B cell (primary cell): ENCODE measurements at regions of chr14 and their contacts with region 1.

Region 1: DNA sequence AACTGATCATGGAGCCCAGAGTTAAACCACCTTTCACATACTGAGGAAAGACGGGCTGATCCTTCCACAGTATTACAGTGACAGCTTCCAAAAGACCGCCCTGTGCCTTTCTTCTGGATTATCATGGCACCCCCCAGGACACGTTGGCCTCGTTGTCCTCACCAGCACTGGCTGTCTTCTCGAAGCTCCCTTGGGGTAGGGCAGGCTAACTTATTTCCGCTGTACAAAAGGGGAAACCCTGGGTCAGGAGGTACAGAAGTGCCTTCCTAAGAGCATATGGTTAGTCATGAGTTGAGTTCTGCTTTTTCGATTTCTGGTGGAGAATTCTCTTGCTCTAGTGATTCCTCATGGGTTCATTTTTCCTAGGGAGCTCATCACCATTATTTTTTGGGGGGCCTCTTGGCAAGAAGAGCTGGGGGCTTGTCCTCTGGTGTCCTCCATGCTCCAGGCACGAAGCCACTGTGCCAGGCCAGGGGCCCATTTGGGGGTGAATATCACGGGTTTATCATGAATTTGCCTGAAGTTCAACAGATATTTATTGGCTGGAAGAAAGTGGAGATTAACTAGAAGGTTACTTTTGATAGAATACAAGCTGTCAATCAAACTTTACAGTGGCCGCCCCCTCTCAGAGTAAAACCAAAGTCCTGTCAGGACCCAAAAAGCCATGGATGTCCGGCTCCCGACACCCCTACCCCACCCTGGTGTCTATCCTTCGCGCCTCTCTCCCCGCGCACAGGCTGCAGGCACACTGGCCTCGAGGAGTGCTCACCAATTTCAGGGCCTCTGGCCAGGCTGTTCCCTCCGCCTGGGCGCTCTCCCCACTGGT is 8.8 kb upstream of the TRAF3 start:
- DNase-seq: peak; percentile 94
- ATAC-seq: peak; percentile 95
- H3K4me3 ChIP-seq: peak overlapping the region in 1 of 5 experiments; percentile 10
- H3K4me3 Mint-ChIP-seq: peak overlapping the region; percentile 48
- H3K27ac ChIP-seq: peak overlapping the region; percentile 98
- H3K27ac Mint-ChIP-seq: peak overlapping the region; percentile 97
- H3K4me1 ChIP-seq: peaks cover 47 to 71% of the 10 kb centered on the region in 2 donors
- H3K4me1 Mint-ChIP-seq: peaks cover 68% of the 10 kb centered on the region
- H3K27me3 ChIP-seq: no peaks in the 10 kb centered on the region
- H3K27me3 Mint-ChIP-seq: no peaks in the 10 kb centered on the region
- CTCF ChIP-seq: no peak

Region 2: GRCh38 chr14:102545461-102546265 is 222.8 kb before region 1 on chr14:
- CTCF ChIA-PET with region 1: no interaction called
- POLR2A ChIA-PET with region 1: no interaction called
- intact Hi-C with region 1: no loop called
- DNase-seq: no peak
- ATAC-seq: no peak
- H3K4me3 ChIP-seq: peak overlapping the region in 1 of 5 experiments; percentile 26
- H3K4me3 Mint-ChIP-seq: peak overlapping the region; percentile 68
- H3K27ac ChIP-seq: no peak overlapping the region
- H3K27ac Mint-ChIP-seq: no peak overlapping the region
- H3K4me1 ChIP-seq: peaks cover 20 to 22% of the 10 kb centered on the region in 2 donors
- H3K4me1 Mint-ChIP-seq: peaks cover 10% of the 10 kb centered on the region
- H3K27me3 ChIP-seq: peaks cover 0 to 34% (median 16%) of the 10 kb centered on the region in 4 experiments
- H3K27me3 Mint-ChIP-seq: peaks cover 36% of the 10 kb centered on the region
- CTCF ChIP-seq: no peak

Region 3: GRCh38 chr14:102708494-102708893 is 59.9 kb before region 1 on chr14:
- CTCF ChIA-PET with region 1: interaction called, 8 read pairs
- POLR2A ChIA-PET with region 1: no interaction called
- intact Hi-C with region 1: loop called (anchors 5 kb)
- DNase-seq: no peak
- ATAC-seq: no peak
- H3K4me3 ChIP-seq: no peak overlapping the region
- H3K4me3 Mint-ChIP-seq: no peak overlapping the region
- H3K27ac ChIP-seq: no peak overlapping the region
- H3K27ac Mint-ChIP-seq: peak overlapping the region; percentile 72
- H3K4me1 ChIP-seq: no peaks in the 10 kb centered on the region
- H3K4me1 Mint-ChIP-seq: peaks cover 4% of the 10 kb centered on the region
- H3K27me3 ChIP-seq: no peaks in the 10 kb centered on the region
- H3K27me3 Mint-ChIP-seq: no peaks in the 10 kb centered on the region
- CTCF ChIP-seq: no peak

Region 4: DNA sequence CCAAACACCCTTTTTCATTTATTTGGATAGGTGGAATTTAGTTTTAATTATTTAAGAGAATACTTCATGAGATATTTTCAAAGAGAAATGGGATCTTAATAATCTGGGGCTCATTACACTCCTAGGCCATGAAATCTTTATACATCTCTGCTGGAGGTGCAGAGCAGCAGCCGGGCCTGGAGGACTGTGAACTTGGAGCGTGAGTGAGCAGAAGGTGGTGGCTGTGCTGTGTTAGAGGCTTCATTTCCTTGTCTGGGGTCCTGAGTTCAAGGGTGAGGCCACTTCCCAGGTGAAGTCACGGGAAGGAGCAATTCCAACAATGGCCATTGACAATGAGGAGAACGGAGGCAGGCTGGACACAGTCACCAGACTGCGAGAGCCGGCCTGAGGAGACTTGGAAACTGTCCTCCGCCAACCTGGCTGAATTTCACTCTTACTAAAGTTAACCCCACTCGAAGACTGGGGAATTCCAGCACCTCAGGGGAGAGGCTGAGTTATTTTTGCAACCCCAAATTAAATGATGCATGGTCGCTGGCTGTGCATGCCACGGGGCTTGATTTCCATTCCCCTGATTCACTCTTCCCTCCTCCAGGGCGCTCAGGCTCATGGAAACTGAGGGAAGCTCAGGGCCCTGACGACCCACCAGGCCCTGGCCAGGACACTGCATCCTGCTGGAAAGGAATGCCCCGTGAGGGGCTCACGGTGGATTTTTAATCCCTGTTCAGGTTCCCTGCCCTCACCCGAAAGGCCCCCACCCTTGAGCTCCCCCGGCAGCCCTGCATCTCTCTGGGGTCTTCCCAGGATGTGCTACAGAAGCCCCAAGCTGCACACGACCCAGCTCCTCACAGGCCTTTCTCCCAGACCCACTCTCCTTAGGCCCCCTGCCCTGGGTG is 13.8 kb before region 1 on chr14:
- CTCF ChIA-PET with region 1: interaction called, 3 read pairs
- POLR2A ChIA-PET with region 1: no interaction called
- intact Hi-C with region 1: loop called (anchors 1 kb)
- DNase-seq: peak; percentile 62
- ATAC-seq: peak; percentile 68
- H3K4me3 ChIP-seq: peak overlapping the region in 2 of 5 experiments; percentile 15 to 25
- H3K4me3 Mint-ChIP-seq: peak overlapping the region; percentile 65
- H3K27ac ChIP-seq: peak overlapping the region in 1 of 2 donors; percentile 37
- H3K27ac Mint-ChIP-seq: peak overlapping the region; percentile 81
- H3K4me1 ChIP-seq: peaks cover 30 to 34% of the 10 kb centered on the region in 2 donors
- H3K4me1 Mint-ChIP-seq: peaks cover 48% of the 10 kb centered on the region
- H3K27me3 ChIP-seq: no peaks in the 10 kb centered on the region
- H3K27me3 Mint-ChIP-seq: no peaks in the 10 kb centered on the region
- CTCF ChIP-seq: no peak

Region 5: GRCh38 chr14:102833341-102833740 is 64.9 kb after region 1 on chr14:
- CTCF ChIA-PET with region 1: no interaction called
- POLR2A ChIA-PET with region 1: no interaction called
- intact Hi-C with region 1: no loop called
- DNase-seq: no peak
- ATAC-seq: no peak
- H3K4me3 ChIP-seq: no peak overlapping the region
- H3K4me3 Mint-ChIP-seq: no peak overlapping the region
- H3K27ac ChIP-seq: no peak overlapping the region
- H3K27ac Mint-ChIP-seq: no peak overlapping the region
- H3K4me1 ChIP-seq: peaks cover 0 to 3% of the 10 kb centered on the region in 2 donors
- H3K4me1 Mint-ChIP-seq: peaks cover 33% of the 10 kb centered on the region
- H3K27me3 ChIP-seq: no peaks in the 10 kb centered on the region
- H3K27me3 Mint-ChIP-seq: no peaks in the 10 kb centered on the region
- CTCF ChIP-seq: no peak